Activated CD4-positive, alpha-beta T cell treated with anti-CD3 and anti-CD28 coated beads, Interleukin-2, amount 10 ng/mL, durations not matched to agents 24 days and 14 days (primary cell): ENCODE measurements at regions of chr11 and their contacts with region 1.

Region 1: DNA sequence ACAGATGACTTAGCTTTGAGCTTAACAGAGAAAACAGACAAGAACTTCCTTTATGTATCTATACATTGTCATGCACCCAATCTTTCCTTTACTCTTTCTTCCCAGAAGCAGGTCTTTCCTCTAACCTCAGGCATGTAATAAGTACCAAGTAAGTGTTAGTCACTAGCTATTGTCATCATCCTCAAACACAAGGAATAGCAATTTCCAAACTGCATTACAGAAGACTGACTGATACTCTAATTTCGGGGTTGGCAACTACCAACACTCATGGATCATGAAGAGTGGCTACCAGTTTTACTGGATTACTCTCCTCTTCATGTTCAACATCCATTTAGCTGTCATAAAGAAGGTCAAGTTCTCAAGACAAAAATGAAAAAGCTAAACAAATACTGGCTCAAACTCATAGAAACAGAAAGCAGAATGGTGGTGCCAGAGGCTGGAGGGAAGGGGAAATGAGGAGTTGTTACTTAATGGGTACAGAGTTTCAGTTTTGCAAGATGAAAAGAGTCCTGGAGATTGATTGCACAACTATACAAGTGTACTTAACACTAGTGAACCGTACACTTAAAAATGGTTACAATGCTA is 111.6 kb downstream of the SIK3 start:
- DNase-seq: peak; percentile 76
- H3K4me3 Mint-ChIP-seq: peak overlapping the region; percentile 66
- H3K27ac Mint-ChIP-seq: peak overlapping the region; percentile 86
- H3K4me1 Mint-ChIP-seq: peaks cover 56% of the 10 kb centered on the region
- H3K27me3 Mint-ChIP-seq: no peaks in the 10 kb centered on the region

Region 2: GRCh38 chr11:116485425-116485824 is 501.2 kb before region 1 on chr11:
- intact Hi-C with region 1: no loop called
- DNase-seq: no peak
- H3K4me3 Mint-ChIP-seq: no peak overlapping the region
- H3K27ac Mint-ChIP-seq: no peak overlapping the region
- H3K4me1 Mint-ChIP-seq: no peaks in the 10 kb centered on the region
- H3K27me3 Mint-ChIP-seq: peaks cover 2% of the 10 kb centered on the region

Region 3: DNA sequence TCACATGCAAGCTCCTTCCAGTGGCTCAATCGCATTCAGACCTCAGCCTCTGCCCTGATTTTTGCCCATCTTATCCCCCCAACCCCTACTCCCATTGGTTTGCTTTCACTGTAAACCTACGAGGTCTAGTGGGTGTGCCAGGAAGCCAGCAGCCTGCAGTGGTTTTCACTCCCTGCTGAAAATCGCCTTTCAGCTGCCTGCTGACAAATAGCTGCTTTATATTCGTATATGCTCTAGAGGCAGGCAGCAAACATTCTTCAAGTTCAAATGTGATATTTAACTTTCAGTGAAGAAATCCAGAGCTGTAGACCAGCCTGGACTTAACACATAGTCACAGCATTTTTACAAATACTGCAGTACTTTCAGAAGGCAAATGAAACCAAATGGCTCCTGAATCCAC is 56.4 kb before region 1 on chr11:
- intact Hi-C with region 1: loop called (anchors 5 kb)
- DNase-seq: peak; percentile 86
- H3K4me3 Mint-ChIP-seq: peak overlapping the region; percentile 88
- H3K27ac Mint-ChIP-seq: peak overlapping the region; percentile 89
- H3K4me1 Mint-ChIP-seq: peaks cover 55% of the 10 kb centered on the region
- H3K27me3 Mint-ChIP-seq: no peaks in the 10 kb centered on the region

Region 4: DNA sequence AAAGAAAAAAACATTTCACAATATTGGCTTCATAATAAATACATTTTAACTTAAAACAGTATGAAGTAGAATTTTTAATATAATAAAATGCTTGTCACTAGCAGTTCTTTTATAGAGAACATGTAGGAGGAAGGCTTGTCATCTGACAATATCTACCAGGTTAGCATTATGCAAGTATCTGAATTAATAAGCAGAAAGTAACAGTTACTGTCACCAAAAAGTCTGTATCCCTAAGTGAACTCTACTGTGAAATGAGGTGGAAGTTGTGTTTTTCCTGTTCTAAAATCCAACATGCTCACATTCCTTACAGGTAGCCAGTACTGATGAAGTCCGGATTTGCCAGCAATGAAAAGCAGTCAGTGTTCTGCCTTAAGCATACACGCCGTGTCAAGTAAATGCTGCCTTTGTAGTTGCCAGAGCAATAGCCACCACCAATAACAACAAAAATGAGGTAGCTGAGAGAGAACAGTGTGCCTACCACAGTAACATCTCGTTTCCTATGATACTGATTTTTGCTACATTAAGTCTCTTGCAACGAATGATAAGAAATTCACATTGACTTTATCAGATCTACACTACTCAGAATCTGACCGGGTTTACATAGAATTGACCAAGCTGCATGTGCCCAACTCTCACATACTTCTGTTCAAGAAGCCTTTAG is 16.2 kb after region 1 on chr11:
- intact Hi-C with region 1: loop called (anchors 1 kb)
- DNase-seq: peak; percentile 69
- H3K4me3 Mint-ChIP-seq: no peak overlapping the region
- H3K27ac Mint-ChIP-seq: peak overlapping the region; percentile 76
- H3K4me1 Mint-ChIP-seq: peaks cover 38% of the 10 kb centered on the region
- H3K27me3 Mint-ChIP-seq: no peaks in the 10 kb centered on the region

Region 5: GRCh38 chr11:117020287-117020686 is 33.7 kb after region 1 on chr11:
- intact Hi-C with region 1: loop called (anchors 1 kb)
- DNase-seq: peak; percentile 56
- H3K4me3 Mint-ChIP-seq: peak overlapping the region; percentile 18
- H3K27ac Mint-ChIP-seq: peak overlapping the region; percentile 66
- H3K4me1 Mint-ChIP-seq: peaks cover 49% of the 10 kb centered on the region
- H3K27me3 Mint-ChIP-seq: no peaks in the 10 kb centered on the region

Region 6: DNA sequence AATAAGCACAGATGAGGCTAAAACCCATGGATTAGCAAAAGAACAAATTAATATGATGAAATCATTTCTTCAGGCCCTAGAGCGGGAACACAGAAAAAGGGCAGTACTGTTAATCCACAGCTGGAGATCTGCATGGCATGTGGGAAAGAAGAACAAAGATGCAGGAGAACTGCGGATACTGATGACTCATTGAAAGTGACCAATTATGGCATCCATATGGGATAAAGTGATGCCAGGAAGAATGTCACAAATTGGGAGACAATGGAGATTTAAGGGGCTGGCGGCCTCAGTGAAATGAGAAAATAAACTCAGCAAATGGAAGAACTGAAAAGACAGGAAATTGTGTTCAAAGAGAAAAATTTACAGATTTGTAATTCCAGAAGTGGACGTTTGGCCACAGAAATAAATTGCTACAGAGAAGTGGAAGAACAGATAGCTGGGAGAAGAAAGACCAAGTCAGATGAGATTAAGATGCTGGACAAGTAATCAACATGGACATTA is 72.2 kb after region 1 on chr11:
- intact Hi-C with region 1: loop called (anchors 1 kb)
- DNase-seq: no peak
- H3K4me3 Mint-ChIP-seq: no peak overlapping the region
- H3K27ac Mint-ChIP-seq: no peak overlapping the region
- H3K4me1 Mint-ChIP-seq: peaks cover 40% of the 10 kb centered on the region
- H3K27me3 Mint-ChIP-seq: no peaks in the 10 kb centered on the region